Common myeloid progenitor, CD34-positive (primary cell): ENCODE measurements at regions of chr7 and their contacts with region 1.

Region 1: DNA sequence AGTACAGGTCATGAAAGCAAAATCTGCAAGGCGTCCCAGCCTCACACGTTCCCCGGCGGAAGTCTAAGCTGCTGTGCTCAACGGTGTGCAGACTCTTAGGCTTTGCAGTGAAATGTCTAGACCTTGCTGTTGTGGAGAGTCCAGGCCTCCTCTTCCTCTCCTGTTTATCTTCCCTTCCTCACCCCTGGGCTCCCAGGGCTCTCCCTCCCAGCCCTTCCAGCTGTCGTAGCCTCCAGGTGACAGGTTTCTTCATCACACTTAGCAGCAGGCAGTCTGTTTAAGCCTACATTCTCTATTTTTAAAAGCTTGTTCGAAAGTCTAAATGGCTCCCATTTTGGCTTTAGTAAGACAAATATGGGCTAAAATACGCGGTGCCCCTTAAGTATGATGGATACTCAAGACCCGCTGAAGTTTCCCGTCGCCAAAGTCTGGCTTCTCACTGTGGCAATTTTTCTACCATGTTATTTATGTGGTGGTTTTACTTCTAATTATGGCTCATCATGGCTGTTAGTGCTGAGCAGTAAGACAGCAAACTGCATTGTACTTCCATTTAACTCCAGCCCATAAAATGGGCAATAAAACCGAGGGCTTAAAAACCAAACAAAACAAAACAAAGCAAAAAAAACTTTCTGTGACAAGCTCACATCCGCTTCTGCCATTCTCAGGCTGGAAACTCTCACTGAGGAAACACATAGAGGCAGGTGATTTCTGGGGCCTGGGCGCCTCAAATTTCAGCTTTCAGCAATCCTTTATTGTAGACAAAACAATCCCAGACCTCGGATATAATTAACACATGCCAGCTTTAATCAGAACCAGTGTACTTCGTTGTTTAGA is 243.2 kb downstream of the SNX10 start:
- DNase-seq: no peak
- H3K4me3 ChIP-seq: peak overlapping the region in 3 of 7 experiments; percentile 23 to 74 (median 27)
- H3K27ac ChIP-seq: no peak overlapping the region
- H3K4me1 ChIP-seq: peaks cover 3 to 72% (median 60%) of the 10 kb centered on the region in 4 experiments
- H3K27me3 ChIP-seq: no peaks in the 10 kb centered on the region

Region 2: DNA sequence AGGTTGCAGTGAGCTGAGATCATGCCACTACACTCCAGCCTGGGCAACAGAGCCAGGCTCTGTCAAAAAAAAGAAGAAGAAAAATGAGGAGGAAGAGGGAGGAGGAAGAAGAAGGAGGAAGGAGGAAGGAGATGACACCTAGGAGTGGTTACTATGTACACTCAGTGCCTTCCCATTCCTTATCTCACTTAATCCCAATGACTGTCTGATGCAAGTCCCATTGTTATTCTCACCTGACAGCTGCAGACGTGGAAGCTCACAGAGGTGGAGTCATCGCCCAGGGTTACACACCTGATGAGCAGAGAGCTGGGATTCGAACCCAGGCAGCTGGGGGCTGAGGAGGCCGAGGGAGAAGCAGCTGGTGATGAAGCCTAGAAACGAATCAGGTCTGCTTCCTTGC is 15.6 kb after region 1 on chr7:
- CTCF ChIA-PET with region 1: interaction called, 10 read pairs
- POLR2A ChIA-PET with region 1: interaction called, 9 read pairs
- DNase-seq: no peak
- H3K4me3 ChIP-seq: no peak overlapping the region
- H3K27ac ChIP-seq: no peak overlapping the region
- H3K4me1 ChIP-seq: peaks cover 11 to 81% (median 67%) of the 10 kb centered on the region in 4 experiments
- H3K27me3 ChIP-seq: no peaks in the 10 kb centered on the region